OCI-LY7 (cell line): ENCODE measurements at regions of chr9 and their contacts with region 1.

Region 1: DNA sequence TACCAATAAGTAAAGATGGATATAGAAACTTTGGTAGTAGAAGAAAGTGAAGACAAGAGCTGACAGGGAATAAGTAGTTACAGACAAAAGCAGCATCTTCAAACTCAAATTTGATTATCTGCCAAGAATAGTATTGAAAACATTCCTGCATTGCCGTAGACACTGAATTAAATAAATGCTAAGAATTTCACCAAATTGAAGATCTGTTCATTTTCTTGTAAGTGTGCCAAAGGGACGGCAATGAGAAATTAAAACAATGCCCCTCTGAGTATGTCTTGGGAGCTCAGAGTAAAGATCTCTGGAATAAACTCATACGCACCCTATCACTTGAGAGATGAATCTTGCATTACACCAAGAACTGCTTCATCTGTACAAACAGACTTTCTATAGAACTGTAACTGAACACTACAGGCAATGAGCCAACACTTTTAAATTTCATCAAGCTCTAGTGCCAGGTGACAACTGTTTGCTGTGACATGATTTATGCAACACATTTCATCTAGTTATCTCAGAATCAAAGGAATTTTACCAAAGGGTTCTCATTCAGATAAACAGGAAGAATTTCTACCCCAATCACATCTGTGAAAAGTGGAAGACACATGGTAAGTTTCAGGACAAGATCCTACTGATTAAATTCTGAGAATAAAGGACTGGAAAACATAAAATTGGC is 66.9 kb downstream of the RFX3 start:
- DNase-seq: no peak
- H3K4me3 ChIP-seq: no peak overlapping the region
- H3K27ac ChIP-seq: no peak overlapping the region
- H3K4me1 ChIP-seq: no peaks in the 10 kb centered on the region
- CTCF ChIP-seq: no peak

Region 2: DNA sequence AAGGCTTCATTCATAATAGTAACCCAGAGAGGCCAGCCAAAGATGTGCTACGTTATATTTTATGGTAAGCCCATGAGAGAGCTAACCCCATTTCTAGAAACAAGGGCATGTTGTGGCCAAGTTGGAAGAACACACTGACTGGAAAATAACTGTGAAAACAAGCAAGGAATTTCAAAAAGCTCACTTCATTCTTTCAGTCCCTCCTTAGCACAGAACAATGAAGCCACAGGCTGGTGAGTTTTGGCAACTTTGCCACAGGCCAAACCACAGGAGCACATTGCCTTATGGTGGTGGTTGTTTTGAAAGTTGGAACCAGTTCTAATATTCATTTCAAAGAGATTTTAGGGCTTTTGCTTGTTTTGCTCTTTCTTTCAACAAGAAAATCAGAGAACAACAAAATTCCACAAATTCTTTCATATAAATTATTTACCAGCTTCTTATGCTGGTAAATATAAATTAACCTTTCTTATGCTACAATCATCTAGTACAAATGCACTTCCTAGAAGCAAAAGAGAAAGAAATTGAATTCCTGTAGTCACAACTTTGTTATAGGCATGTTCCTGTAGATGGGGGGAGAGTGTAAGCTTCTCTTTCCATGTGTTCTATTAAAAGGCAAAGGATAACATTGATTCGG is 292.3 kb after region 1 on chr9:
- CTCF ChIA-PET with region 1: no interaction called
- POLR2A ChIA-PET with region 1: no interaction called
- intact Hi-C with region 1: loop called (anchors 5 kb)
- DNase-seq: no peak
- H3K4me3 ChIP-seq: no peak overlapping the region
- H3K27ac ChIP-seq: no peak overlapping the region
- H3K4me1 ChIP-seq: no peaks in the 10 kb centered on the region
- CTCF ChIP-seq: no peak